WTC11 (cell line): ENCODE measurements at regions of chr7 and their contacts with region 1.

Region 1: GRCh38 chr7:93551063-93551904 is 23.2 kb downstream of the CALCR start:
- DNase-seq: no peak
- ATAC-seq: peak; percentile 91
- H3K4me3 Mint-ChIP-seq: no peak overlapping the region
- H3K27ac Mint-ChIP-seq: no peak overlapping the region
- H3K4me1 Mint-ChIP-seq: peaks cover 4% of the 10 kb centered on the region; the same call in 1 of the 2 replicates
- H3K27me3 Mint-ChIP-seq: no peaks in the 10 kb centered on the region
- CTCF ChIP-seq: peak; percentile 32

Region 2: GRCh38 chr7:93245525-93246432 is 305.5 kb before region 1 on chr7:
- CTCF ChIA-PET with region 1: interaction called, 23 read pairs
- POLR2A ChIA-PET with region 1: no interaction called
- DNase-seq: no peak
- ATAC-seq: no peak
- H3K4me3 Mint-ChIP-seq: no peak overlapping the region
- H3K27ac Mint-ChIP-seq: no peak overlapping the region
- H3K4me1 Mint-ChIP-seq: no peaks in the 10 kb centered on the region
- H3K27me3 Mint-ChIP-seq: no peaks in the 10 kb centered on the region
- CTCF ChIP-seq: peak; percentile 73

Region 3: GRCh38 chr7:93315896-93316295 is 235.4 kb before region 1 on chr7:
- CTCF ChIA-PET with region 1: no interaction called
- POLR2A ChIA-PET with region 1: no interaction called
- DNase-seq: no peak
- ATAC-seq: no peak
- H3K4me3 Mint-ChIP-seq: no peak overlapping the region
- H3K27ac Mint-ChIP-seq: no peak overlapping the region
- H3K4me1 Mint-ChIP-seq: peaks cover 8% of the 10 kb centered on the region
- H3K27me3 Mint-ChIP-seq: no peaks in the 10 kb centered on the region
- CTCF ChIP-seq: no peak

Region 4: DNA sequence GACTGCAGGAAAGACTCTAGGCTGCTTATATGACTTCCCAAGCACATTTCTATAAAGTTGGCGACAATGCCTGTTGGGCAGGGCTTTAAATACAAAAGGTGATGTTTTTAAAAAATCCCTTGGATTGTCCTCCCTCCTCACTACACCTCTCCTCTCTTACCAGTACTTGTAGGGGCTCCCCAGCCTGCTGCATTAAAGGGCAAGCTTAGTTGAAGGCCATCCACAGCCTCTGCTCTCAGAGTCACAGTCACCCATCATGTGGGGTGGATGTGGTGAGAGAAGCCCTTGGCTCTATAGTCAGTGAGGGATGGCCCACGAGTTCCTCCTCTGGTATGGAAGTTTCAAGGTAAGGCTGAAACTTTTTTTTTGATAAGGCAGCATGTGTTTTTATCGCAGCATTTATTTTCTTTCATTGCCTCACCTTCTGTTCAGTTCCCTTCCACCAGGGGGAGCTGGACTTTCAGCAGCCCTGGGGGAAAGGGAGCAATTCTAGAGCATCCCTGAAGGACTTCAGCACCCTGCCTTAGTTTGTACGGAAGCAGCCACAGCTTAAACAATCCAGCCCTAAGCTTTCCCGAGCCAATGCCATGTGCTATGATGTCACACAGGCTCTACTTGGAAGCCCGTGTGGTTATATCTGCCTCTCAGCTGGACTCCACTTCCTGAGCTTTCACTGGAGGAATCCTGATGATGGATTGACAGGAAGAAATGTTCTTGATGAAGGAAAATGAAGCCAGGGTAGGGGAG is 108.6 kb before region 1 on chr7:
- CTCF ChIA-PET with region 1: interaction called, 31 read pairs
- POLR2A ChIA-PET with region 1: no interaction called
- DNase-seq: peak; percentile 63
- ATAC-seq: peak; percentile 94
- H3K4me3 Mint-ChIP-seq: no peak overlapping the region
- H3K27ac Mint-ChIP-seq: no peak overlapping the region
- H3K4me1 Mint-ChIP-seq: peaks cover 8% of the 10 kb centered on the region
- H3K27me3 Mint-ChIP-seq: no peaks in the 10 kb centered on the region
- CTCF ChIP-seq: peak; percentile 71

Region 5: DNA sequence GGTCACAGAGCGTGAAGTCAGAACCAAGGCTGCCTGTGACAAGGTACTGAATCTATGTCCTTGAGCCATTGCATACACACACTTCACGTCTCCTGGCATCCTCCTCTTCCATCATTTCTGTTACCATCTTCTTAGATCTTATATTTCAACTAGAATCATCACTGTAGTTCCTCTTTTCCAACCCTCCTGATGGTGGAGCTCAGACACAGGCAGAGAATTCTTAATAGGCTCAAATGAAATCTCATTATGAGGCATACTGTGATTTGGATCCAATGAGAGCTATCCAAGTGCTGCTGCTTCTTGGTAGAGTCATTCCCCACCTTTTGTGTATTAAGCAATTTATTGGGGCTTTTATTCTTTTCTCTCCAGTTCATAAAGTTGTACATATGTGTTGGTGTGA is 89.9 kb before region 1 on chr7:
- CTCF ChIA-PET with region 1: interaction called, 33 read pairs
- POLR2A ChIA-PET with region 1: no interaction called
- DNase-seq: no peak
- ATAC-seq: peak; percentile 84
- H3K4me3 Mint-ChIP-seq: no peak overlapping the region
- H3K27ac Mint-ChIP-seq: no peak overlapping the region
- H3K4me1 Mint-ChIP-seq: no peaks in the 10 kb centered on the region
- H3K27me3 Mint-ChIP-seq: no peaks in the 10 kb centered on the region
- CTCF ChIP-seq: no peak

Region 6: DNA sequence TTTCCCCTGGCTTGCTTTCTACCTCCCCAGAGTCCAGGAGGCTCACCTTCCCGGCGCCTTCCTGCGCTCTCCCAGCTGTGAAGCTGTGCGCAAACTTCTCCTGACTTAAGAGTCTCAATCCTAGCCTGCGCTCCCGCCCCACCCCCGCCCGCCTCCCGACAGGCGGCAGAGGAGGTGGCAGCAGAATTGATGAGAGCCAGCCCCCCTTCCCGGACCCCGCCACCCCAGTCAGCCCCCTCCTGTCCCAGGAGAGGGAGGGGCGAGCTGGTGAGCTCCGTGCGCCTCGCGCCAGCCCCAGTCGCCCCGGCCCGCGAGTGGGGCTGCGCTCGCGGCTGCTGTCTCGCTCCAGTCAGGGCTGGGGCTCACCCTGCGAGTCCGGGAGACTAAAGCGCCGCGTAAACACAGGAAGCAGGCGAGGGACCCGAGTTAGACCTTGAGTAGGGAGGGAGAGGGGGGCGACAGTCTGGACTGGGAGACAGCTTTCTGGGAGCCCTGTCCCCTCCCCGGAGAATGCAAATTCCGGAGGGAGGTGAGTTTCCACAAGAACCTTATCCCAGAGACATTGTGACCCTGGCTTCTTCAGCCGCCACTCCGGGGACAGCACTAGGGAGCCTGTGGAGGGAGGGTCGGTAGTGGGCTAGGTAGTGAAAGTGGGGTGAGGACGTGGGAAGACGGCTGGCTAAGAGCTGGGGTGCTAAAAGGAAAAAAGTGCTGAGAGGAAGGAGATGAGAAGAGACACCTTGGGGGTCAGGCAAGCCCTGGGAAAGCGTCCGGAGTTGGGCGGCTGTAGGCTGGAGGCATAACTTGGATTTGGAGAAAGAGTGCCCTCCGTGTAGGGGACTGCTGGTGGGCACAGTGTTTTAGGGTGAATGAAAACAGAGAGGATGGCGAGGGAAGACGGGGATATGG is 23.6 kb after region 1 on chr7 and contains the start of gene CALCR:
- CTCF ChIA-PET with region 1: interaction called, 11 read pairs
- POLR2A ChIA-PET with region 1: no interaction called
- DNase-seq: peak; percentile 65
- ATAC-seq: peak; percentile 80
- H3K4me3 Mint-ChIP-seq: peak within 1 kb of the TSS; percentile 92
- H3K27ac Mint-ChIP-seq: no peak within 1 kb of the TSS
- H3K4me1 Mint-ChIP-seq: peaks cover 13% of the 10 kb centered on the region
- H3K27me3 Mint-ChIP-seq: peaks cover 75% of the 10 kb centered on the region
- CTCF ChIP-seq: no peak
- total RNA-seq, gene CALCR: 0.81 to 1.3 TPM (median 1.2 TPM) in 3 replicates

Region 7: DNA sequence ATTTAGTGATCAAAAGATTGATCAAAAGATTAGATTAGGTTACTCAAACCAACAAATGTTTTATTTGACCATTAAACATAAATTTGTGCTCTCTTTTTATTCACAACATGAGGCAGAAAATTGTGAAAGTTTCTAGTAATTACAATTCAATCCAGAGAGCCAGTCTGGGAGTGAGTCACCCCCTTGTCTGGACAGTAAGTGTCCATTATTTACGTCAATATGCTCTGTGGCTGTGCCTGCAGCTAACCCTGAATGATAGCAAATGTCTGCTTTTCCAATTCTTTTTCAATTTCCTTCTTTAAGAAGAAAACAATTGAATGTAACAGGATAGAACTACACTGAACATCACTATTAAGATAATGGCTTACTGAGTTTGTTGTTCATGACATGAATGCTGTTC is 398.2 kb after region 1 on chr7:
- CTCF ChIA-PET with region 1: no interaction called
- POLR2A ChIA-PET with region 1: no interaction called
- DNase-seq: no peak
- ATAC-seq: no peak
- H3K4me3 Mint-ChIP-seq: no peak overlapping the region
- H3K27ac Mint-ChIP-seq: no peak overlapping the region
- H3K4me1 Mint-ChIP-seq: peaks cover 7% of the 10 kb centered on the region; the same call in 1 of the 2 replicates
- H3K27me3 Mint-ChIP-seq: no peaks in the 10 kb centered on the region
- CTCF ChIP-seq: no peak